Activated CD4-positive, alpha-beta memory T cell treated with anti-CD3 and anti-CD28 coated beads for 36 hours (primary cell): ENCODE measurements at regions of chr3 and their contacts with region 1.

Region 1: GRCh38 chr3:71064288-71064955 is 519.1 kb downstream of the FOXP1 start:
- DNase-seq: peak; percentile 78
- H3K4me3 Mint-ChIP-seq: no peak overlapping the region
- H3K27ac Mint-ChIP-seq: no peak overlapping the region
- H3K4me1 Mint-ChIP-seq: peaks cover 63% of the 10 kb centered on the region
- H3K27me3 Mint-ChIP-seq: no peaks in the 10 kb centered on the region

Region 2: DNA sequence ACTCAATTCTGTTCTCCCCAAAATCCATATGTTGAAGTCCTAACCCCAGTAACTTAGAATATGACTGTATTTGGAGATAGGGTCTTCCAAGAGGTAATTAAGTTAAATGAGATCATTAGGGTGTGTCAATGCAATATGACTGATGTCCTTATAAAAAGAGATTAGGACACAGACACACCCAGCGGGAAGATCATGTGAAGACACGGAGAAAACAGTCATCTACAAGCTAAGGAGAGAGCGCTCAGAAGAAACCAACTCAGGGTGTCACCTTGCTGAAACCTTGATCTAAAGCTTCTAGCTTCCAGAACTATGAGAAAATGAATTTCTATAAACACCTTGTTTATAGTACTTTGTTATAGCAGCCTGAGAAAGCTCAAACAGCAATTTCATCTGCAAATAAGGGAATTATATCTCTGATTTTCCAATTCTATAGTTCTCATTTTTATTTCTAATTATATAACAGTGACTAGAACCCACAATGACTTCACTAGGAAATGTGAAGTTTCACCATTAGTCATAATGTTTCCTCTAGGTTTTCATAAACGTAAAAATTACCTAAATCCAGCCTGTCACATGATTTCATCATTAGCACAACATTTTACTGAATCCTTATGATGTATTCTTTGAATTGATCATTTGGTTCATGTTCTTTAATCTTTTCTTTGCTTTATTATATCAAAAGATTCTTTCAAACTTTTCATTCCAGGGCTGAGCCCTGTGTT is 292.8 kb before region 1 on chr3:
- CTCF ChIA-PET with region 1: no interaction called
- POLR2A ChIA-PET with region 1: no interaction called
- intact Hi-C with region 1: loop called (anchors 5 kb)
- DNase-seq: no peak
- H3K4me3 Mint-ChIP-seq: no peak overlapping the region
- H3K27ac Mint-ChIP-seq: no peak overlapping the region
- H3K4me1 Mint-ChIP-seq: peaks cover 5% of the 10 kb centered on the region
- H3K27me3 Mint-ChIP-seq: peaks cover 33% of the 10 kb centered on the region

Region 3: DNA sequence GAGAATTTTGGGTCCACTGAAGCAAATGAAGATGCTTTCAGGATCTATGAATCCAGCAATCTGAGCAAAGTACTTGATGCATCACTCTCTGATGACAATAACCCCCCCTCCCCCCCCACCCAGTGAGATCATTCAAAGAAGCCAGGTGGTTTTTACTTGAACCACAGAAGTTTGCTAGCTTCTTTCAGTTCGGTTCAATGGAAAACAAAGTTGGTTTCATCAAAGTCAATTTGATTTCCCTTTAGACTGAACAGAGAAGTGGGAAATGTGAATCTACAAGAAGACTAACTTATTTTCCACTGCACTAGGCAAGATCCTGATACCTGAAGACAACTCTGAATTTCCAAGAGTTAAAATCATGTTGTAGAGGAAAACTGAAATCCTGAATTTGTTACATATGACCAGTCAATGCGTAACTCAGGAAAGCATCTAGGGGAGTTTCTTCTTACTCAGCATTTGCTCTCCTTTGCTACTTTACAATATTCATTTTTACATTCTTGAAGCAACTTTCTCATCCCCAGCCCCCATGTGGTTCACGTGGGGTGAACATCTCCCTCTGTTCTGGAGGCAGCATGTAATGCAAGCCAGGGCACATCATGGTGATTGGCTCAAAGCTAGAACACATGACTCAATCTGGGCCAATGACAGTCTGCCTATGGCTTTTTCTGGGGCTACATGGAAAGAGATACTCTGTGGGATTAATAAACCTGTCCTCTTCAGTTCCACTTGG is 53.5 kb before region 1 on chr3:
- CTCF ChIA-PET with region 1: interaction called, 9 read pairs
- POLR2A ChIA-PET with region 1: interaction called, 11 read pairs
- intact Hi-C with region 1: loop called (anchors 1 kb)
- DNase-seq: peak; percentile 87
- H3K4me3 Mint-ChIP-seq: peak overlapping the region; percentile 56
- H3K27ac Mint-ChIP-seq: peak overlapping the region; percentile 92
- H3K4me1 Mint-ChIP-seq: peaks cover 68% of the 10 kb centered on the region
- H3K27me3 Mint-ChIP-seq: no peaks in the 10 kb centered on the region

Region 4: GRCh38 chr3:71087143-71088018 is 23.0 kb after region 1 on chr3:
- CTCF ChIA-PET with region 1: interaction called, 6 read pairs
- POLR2A ChIA-PET with region 1: interaction called, 20 read pairs
- intact Hi-C with region 1: loop called (anchors 1 kb)
- DNase-seq: peak; percentile 62
- H3K4me3 Mint-ChIP-seq: peak overlapping the region; percentile 38
- H3K27ac Mint-ChIP-seq: peak overlapping the region; percentile 81
- H3K4me1 Mint-ChIP-seq: peaks cover 88% of the 10 kb centered on the region
- H3K27me3 Mint-ChIP-seq: no peaks in the 10 kb centered on the region

Region 5: GRCh38 chr3:71114610-71115009 is 50.2 kb after region 1 on chr3:
- CTCF ChIA-PET with region 1: no interaction called
- POLR2A ChIA-PET with region 1: no interaction called
- intact Hi-C with region 1: no loop called
- DNase-seq: no peak
- H3K4me3 Mint-ChIP-seq: no peak overlapping the region
- H3K27ac Mint-ChIP-seq: no peak overlapping the region
- H3K4me1 Mint-ChIP-seq: peaks cover 86% of the 10 kb centered on the region
- H3K27me3 Mint-ChIP-seq: no peaks in the 10 kb centered on the region

Region 6: GRCh38 chr3:71226565-71227269 is 162.3 kb after region 1 on chr3:
- CTCF ChIA-PET with region 1: no interaction called
- POLR2A ChIA-PET with region 1: interaction called, 6 read pairs
- intact Hi-C with region 1: loop called (anchors 1 kb)
- DNase-seq: peak; percentile 96
- H3K4me3 Mint-ChIP-seq: peak overlapping the region; percentile 77
- H3K27ac Mint-ChIP-seq: peak overlapping the region; percentile 96
- H3K4me1 Mint-ChIP-seq: peaks cover 77% of the 10 kb centered on the region
- H3K27me3 Mint-ChIP-seq: no peaks in the 10 kb centered on the region

Region 7: GRCh38 chr3:71380096-71380495 is 315.7 kb after region 1 on chr3:
- CTCF ChIA-PET with region 1: no interaction called
- POLR2A ChIA-PET with region 1: interaction called, 3 read pairs
- intact Hi-C with region 1: loop called (anchors 5 kb)
- DNase-seq: no peak
- H3K4me3 Mint-ChIP-seq: no peak overlapping the region
- H3K27ac Mint-ChIP-seq: peak overlapping the region; percentile 85
- H3K4me1 Mint-ChIP-seq: peaks cover 82% of the 10 kb centered on the region
- H3K27me3 Mint-ChIP-seq: no peaks in the 10 kb centered on the region

Region 8: DNA sequence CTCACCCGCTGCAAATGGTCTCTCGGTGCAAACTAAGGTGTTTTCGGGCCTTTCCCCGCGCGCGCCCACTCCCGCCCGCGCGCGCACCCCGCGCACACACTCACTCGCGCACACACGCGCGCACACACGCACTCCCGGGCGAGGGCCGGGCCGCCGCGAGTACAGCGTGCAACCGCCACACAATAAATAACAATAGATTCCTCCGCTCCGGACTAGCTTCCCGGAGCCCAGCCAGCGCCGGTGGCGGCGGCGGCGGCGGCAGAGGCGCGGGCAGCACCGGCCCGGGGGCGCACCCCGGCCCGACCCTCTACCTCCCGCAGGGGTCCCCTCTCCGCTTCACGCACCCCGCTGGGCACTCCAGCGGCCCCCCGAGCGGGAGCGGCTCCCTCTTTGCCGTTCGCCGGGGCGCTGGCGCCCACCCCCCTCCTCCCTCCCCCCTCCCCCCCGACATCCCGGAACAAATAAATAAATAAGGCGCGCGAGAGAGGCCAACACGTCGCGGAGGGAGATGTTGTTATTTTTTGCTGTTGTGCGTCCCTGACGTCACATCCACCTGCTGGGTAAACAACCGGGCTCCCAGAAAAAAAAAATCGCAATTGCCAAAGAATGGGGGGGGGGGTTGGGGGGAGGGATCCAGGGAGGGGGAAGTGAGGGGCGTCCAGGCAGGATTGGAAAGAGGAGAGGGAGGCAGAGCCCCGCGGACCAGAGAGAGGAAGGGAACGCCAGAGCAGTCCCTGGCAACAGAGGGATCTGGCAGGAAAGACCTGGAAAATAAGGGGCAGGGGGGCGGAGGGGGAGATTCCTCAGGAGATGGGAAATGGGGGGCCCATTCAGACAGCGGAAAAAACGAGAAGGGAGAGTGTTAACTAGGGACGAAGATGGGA is 519.4 kb after region 1 on chr3 and contains the start of gene FOXP1:
- CTCF ChIA-PET with region 1: interaction called, 4 read pairs
- POLR2A ChIA-PET with region 1: interaction called, 35 read pairs
- intact Hi-C with region 1: loop called (anchors 1 kb)
- DNase-seq: peak; percentile 75
- H3K4me3 Mint-ChIP-seq: peak within 1 kb of the TSS; percentile 88
- H3K27ac Mint-ChIP-seq: peak within 1 kb of the TSS; percentile 91
- H3K4me1 Mint-ChIP-seq: peaks cover 56% of the 10 kb centered on the region
- H3K27me3 Mint-ChIP-seq: peaks cover 1% of the 10 kb centered on the region
- total RNA-seq, gene FOXP1: 94.4 to 102 TPM